MCF 10A (cell line): ENCODE measurements at regions of chr2 and their contacts with region 1.

Region 1: DNA sequence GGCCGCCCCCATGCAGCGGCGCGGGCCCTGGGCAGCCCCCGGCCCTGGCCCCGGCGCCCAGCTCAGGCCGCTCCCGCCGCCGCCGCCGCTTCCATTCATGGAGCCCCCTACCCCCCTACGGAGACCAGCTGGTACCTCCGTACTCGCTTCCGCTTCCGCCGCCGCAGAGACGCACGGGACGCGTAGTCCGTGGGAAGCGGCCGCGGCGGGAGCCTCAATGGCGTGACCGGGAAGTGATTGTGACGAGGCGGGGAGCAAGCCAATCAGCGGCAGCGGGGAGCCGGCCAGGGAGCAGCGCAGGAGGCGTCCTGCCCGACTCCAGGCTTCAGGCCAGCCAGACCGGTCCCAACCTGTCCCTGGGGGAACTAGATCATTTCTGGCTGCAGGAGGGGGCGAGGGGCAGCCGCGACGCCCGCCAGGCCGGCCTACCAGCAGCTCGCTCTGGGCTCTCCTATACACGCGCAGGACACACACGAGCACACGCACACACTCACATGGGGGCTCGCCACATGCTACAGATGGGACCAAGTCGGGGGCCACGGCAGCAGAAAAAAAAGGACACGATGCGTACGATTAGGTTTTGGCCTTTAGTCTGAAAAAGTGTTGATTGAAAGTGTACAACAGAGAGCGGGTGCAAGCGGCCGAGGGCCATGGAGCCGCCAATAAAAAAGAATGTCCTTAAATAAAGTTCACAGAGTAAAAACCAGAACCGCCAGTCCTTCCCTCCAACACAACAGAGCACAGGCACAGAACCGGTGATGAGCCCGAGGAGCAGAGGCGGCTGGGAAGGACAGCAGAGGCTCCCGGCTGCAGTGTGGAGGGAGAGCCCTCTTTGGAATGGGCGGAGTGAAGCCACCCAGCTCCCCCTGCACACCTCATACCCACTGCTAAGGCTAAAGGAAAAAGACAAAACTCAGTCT is at the start of gene ZNF513:
- DNase-seq: peak; percentile 95
- H3K4me3 Mint-ChIP-seq: peak within 1 kb of the TSS; percentile 84
- H3K27ac Mint-ChIP-seq: peak within 1 kb of the TSS; percentile 93
- H3K4me1 Mint-ChIP-seq: peaks cover 20% of the 10 kb centered on the region
- H3K27me3 Mint-ChIP-seq: no peaks in the 10 kb centered on the region
- CTCF ChIP-seq: no peak
- total RNA-seq, gene ZNF513: 14.8 and 16.2 TPM in 2 replicates

Region 2: GRCh38 chr2:27356382-27357181 is 24.3 kb before region 1 on chr2 and contains the start of gene GTF3C2:
- CTCF ChIA-PET with region 1: no interaction called
- POLR2A ChIA-PET with region 1: interaction called, 37 read pairs
- intact Hi-C with region 1: no loop called
- DNase-seq: peak; percentile 97
- H3K4me3 Mint-ChIP-seq: peak within 1 kb of the TSS; percentile 90
- H3K27ac Mint-ChIP-seq: peak within 1 kb of the TSS; percentile 93
- H3K4me1 Mint-ChIP-seq: peaks cover 31% of the 10 kb centered on the region
- H3K27me3 Mint-ChIP-seq: no peaks in the 10 kb centered on the region
- CTCF ChIP-seq: no peak
- total RNA-seq, gene GTF3C2: 47.5 and 47.8 TPM in 2 replicates

Region 3: DNA sequence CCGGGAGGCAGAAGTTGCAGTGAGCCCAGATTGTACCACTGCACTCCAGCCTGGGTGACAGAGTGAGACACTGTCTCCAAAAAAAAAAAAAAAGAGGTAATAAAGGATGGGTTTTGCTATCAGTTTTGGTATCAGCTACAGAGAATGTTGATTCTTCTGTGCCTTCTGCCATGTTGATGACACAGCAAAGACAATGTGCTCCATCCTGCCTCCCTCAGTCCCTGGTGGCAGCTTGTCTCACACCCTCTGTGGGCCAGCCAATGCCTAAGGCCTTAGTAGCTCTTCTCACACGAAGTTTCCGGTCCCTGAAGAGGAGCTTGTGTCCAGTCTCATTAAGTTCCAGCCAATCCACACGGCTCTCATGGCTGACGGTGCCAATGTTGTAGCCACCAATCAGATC is 91.1 kb after region 1 on chr2:
- CTCF ChIA-PET with region 1: no interaction called
- POLR2A ChIA-PET with region 1: no interaction called
- intact Hi-C with region 1: no loop called
- DNase-seq: no peak
- H3K4me3 Mint-ChIP-seq: no peak overlapping the region
- H3K27ac Mint-ChIP-seq: no peak overlapping the region
- H3K4me1 Mint-ChIP-seq: no peaks in the 10 kb centered on the region
- H3K27me3 Mint-ChIP-seq: no peaks in the 10 kb centered on the region
- CTCF ChIP-seq: no peak